ENCODE measurements at regions of chr16 and their contacts with region 1.

Region 1: GRCh38 chr16:19583665-19584300 is 28.3 kb downstream of the VPS35L start:
- DNase-seq: peak; percentile 61
- H3K4me3 Mint-ChIP-seq: no peak overlapping the region
- H3K27ac Mint-ChIP-seq: no peak overlapping the region
- H3K4me1 Mint-ChIP-seq: peaks cover 8% of the 10 kb centered on the region
- H3K27me3 Mint-ChIP-seq: no peaks in the 10 kb centered on the region
- CTCF ChIP-seq: peak; percentile 91

Region 2: DNA sequence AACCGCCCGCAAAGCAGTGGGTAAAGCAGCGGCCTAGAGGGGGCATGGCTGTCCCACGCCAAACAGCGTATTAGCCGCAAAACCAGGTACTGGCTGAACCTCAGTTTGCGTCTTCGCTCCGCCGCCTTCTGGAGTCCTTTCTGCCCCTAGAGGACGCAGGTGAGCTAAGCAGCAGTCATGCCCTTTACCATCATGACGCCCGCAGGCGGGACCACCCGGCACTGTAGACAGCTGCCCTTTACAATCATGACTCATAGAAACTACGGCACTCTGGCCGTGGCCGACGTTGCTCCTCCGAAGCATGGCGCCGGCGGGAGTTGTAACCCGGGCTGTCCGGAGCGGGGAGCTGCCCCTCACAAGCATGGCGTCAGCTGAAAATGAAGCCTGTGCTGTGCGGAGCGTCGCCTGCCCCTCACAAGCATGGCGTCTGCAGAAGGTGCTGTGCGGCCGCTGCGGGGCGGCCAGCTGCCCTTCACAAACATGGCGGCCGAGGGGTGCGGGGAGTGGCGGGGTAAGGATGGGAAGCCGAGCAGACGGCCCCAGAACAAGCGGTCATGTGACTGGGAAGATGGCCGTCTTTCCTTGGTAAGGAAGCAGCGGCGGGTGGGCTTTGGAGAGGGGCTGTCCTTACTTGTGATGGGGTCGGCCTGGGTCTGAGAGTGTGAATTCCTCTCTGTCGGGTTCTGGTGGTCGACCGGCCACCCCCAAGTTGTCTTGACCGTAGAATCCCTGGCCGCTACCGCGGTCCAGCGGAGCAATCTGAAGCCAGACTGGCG is 28.4 kb before region 1 on chr16 and contains the start of gene VPS35L:
- CTCF ChIA-PET with region 1: interaction called, 13 read pairs
- intact Hi-C with region 1: loop called (anchors 2 kb)
- DNase-seq: peak; percentile 94
- H3K4me3 Mint-ChIP-seq: peak within 1 kb of the TSS; percentile 71
- H3K27ac Mint-ChIP-seq: peak within 1 kb of the TSS; percentile 66
- H3K4me1 Mint-ChIP-seq: no peaks in the 10 kb centered on the region
- H3K27me3 Mint-ChIP-seq: no peaks in the 10 kb centered on the region
- CTCF ChIP-seq: peak; percentile 51
- total RNA-seq, gene VPS35L: 14.2 and 25.4 TPM in 2 replicates

Region 3: DNA sequence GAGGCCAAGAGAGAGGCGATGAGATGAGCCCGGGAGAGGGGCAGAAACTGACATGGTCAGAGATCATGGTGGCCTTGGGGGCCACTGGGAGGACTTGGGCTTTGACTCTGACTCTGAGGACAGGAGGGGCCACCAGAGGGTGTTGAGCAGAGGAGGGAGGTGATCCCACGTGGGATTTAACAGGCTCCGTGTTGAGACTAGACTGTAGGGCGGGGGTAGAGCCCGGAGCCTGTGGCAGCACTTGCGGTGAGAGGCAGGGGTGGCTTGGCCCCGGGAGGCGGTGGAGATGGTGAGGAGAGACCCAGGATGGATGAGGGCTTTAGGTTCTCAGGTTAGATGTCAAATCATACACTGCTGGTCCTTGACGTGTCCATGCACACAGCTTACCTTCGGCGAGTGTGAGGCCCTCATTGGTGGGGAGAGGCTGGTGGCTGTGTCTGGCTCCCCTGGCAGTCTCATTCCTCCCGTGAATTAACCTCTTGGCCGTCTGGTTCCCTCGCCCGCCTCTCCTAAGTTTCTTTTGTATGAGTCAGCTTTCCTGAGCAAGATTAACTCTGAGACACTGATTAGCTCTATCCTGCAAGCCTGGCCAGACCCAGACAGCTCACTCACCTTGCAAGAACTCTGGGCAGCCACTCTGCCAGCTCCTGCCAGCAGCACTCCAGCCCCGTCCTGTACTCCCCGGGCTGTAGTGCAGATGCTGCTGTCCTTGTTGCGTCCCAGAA is 11.4 kb after region 1 on chr16:
- CTCF ChIA-PET with region 1: interaction called, 43 read pairs
- intact Hi-C with region 1: no loop called
- DNase-seq: peak; percentile 78
- H3K4me3 Mint-ChIP-seq: peak overlapping the region; percentile 42
- H3K27ac Mint-ChIP-seq: peak overlapping the region; percentile 51
- H3K4me1 Mint-ChIP-seq: peaks cover 24% of the 10 kb centered on the region
- H3K27me3 Mint-ChIP-seq: no peaks in the 10 kb centered on the region
- CTCF ChIP-seq: no peak

Region 4: GRCh38 chr16:19601083-19601976 is 17.5 kb after region 1 on chr16:
- CTCF ChIA-PET with region 1: interaction called, 43 read pairs
- intact Hi-C with region 1: no loop called
- DNase-seq: peak; percentile 60
- H3K4me3 Mint-ChIP-seq: no peak overlapping the region
- H3K27ac Mint-ChIP-seq: no peak overlapping the region
- H3K4me1 Mint-ChIP-seq: peaks cover 21% of the 10 kb centered on the region
- H3K27me3 Mint-ChIP-seq: no peaks in the 10 kb centered on the region
- CTCF ChIP-seq: peak; percentile 64